ENCODE measurements at regions of chr14 and their contacts with region 1.

Region 1: DNA sequence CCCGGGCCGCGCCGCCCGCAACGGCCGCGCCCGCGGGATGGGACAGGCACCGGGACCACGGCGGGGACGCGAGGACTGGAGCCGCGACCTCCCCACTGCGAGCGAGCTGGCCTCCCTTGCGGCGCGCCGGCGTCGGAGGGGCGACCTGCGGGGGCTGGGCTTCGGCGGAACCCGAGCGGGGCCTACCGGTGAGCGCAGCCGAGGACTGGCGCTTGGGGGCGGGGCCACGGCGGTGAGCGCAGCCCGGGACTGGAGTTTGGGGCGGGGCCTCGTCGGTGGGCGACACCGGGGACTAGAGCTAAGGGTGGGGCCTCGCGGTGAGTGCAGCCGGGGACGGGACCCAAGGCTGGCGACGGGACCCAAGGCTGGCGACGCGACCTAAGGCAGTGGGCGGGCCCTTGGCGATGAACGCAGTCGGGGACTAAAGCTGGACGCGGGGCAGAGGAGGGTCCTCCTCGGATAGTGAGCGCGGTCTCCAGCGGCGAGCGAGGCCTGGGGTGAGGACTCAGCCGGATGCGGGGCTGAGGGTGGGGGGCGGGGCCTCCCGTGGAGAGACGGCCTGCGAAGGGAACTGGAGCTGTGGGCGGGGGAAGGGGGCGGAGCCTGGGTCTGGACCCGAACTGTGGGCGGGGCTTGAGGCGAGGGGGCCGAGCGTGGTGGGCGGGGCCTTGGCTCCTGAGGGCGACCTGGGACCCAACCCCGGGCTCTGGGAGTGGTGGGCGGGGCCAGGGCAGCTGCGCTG is at the start of gene BRF1:
- DNase-seq: peak; percentile 95 to 100 (median 99)
- ATAC-seq: peak; percentile 90
- H3K4me3 ChIP-seq: peak within 1 kb of the TSS; percentile 71 to 97
- H3K4me3 Mint-ChIP-seq: peak within 1 kb of the TSS; percentile 88
- H3K27ac ChIP-seq: peak within 1 kb of the TSS; percentile 86 to 91
- H3K27ac Mint-ChIP-seq: peak within 1 kb of the TSS; percentile 89
- H3K4me1 ChIP-seq: peaks cover 28% of the 10 kb centered on the region
- H3K4me1 Mint-ChIP-seq: peaks cover 37% of the 10 kb centered on the region
- H3K27me3 ChIP-seq: no peaks in the 10 kb centered on the region
- H3K27me3 Mint-ChIP-seq: no peaks in the 10 kb centered on the region
- CTCF ChIP-seq: no peak
- total RNA-seq, gene BRF1: 60.0 to 61.2 TPM

Region 2: DNA sequence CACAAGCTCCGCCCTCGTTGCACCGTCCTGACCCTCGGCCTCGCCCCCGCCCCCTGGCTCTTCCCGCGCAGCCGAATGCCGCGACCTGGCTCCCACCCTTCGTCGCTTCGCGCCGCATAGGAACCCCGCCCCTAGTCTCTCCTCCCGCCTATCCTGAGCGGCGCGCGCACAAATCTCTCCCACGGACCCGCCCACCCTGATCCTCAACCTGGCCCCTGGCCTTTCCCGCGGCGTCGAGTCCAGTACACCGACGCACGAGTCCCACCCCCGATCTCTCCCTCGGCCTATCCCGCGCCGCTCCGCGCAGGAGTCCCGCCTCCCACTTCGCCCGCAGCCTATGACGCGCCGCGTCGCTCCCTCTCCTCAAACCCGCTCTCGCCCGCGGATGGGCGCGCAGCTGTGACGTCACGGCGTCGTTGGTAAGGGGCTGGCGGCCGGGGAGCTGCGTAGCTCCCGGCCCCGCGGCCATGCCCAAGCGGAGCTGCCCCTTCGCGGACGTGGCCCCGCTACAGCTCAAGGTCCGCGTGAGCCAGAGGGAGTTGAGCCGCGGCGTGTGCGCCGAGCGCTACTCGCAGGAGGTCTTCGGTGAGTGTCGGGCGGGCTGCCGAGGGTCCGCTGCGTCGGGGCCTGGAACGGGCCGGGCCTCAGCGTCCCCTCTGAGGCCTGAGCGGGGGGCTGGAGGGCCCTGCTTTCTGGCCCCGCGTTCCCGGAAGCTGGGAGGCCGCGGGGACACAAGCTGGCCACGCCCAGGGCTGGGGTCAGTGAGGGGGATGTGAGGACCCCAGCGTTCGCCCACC is 548.0 kb before region 1 on chr14 and contains the start of gene SIVA1:
- CTCF ChIA-PET with region 1: no interaction called
- POLR2A ChIA-PET with region 1: no interaction called
- intact Hi-C with region 1: loop called in 1 of 2 experiments (anchors 10 kb)
- DNase-seq: peak; percentile 98 to 100 (median 99)
- ATAC-seq: peak; percentile 88
- H3K4me3 ChIP-seq: peak within 1 kb of the TSS; percentile 87 to 99
- H3K4me3 Mint-ChIP-seq: peak within 1 kb of the TSS; percentile 87
- H3K27ac ChIP-seq: peak within 1 kb of the TSS; percentile 86 to 97
- H3K27ac Mint-ChIP-seq: peak within 1 kb of the TSS; percentile 94
- H3K4me1 ChIP-seq: peaks cover 50% of the 10 kb centered on the region
- H3K4me1 Mint-ChIP-seq: peaks cover 48% of the 10 kb centered on the region
- H3K27me3 ChIP-seq: no peaks in the 10 kb centered on the region
- H3K27me3 Mint-ChIP-seq: no peaks in the 10 kb centered on the region
- CTCF ChIP-seq: no peak
- total RNA-seq, gene SIVA1: 104 to 115 TPM

Region 3: GRCh38 chr14:104985675-104986525 is 315.1 kb before region 1 on chr14 and contains the start of gene CLBA1:
- CTCF ChIA-PET with region 1: no interaction called
- POLR2A ChIA-PET with region 1: no interaction called
- intact Hi-C with region 1: loop called in 1 of 2 experiments (anchors 10 kb)
- DNase-seq: peak; percentile 75 to 97 (median 87)
- ATAC-seq: peak; percentile 94
- H3K4me3 ChIP-seq: peak within 1 kb of the TSS; percentile 54 to 60
- H3K4me3 Mint-ChIP-seq: peak within 1 kb of the TSS; percentile 78
- H3K27ac ChIP-seq: peak within 1 kb of the TSS; percentile 60 to 73
- H3K27ac Mint-ChIP-seq: peak within 1 kb of the TSS; percentile 57
- H3K4me1 ChIP-seq: peaks cover 8% of the 10 kb centered on the region
- H3K4me1 Mint-ChIP-seq: peaks cover 5% of the 10 kb centered on the region
- H3K27me3 ChIP-seq: no peaks in the 10 kb centered on the region
- H3K27me3 Mint-ChIP-seq: peaks cover 6% of the 10 kb centered on the region
- CTCF ChIP-seq: no peak
- total RNA-seq, gene CLBA1: 0.84 to 1.0 TPM

Region 4: DNA sequence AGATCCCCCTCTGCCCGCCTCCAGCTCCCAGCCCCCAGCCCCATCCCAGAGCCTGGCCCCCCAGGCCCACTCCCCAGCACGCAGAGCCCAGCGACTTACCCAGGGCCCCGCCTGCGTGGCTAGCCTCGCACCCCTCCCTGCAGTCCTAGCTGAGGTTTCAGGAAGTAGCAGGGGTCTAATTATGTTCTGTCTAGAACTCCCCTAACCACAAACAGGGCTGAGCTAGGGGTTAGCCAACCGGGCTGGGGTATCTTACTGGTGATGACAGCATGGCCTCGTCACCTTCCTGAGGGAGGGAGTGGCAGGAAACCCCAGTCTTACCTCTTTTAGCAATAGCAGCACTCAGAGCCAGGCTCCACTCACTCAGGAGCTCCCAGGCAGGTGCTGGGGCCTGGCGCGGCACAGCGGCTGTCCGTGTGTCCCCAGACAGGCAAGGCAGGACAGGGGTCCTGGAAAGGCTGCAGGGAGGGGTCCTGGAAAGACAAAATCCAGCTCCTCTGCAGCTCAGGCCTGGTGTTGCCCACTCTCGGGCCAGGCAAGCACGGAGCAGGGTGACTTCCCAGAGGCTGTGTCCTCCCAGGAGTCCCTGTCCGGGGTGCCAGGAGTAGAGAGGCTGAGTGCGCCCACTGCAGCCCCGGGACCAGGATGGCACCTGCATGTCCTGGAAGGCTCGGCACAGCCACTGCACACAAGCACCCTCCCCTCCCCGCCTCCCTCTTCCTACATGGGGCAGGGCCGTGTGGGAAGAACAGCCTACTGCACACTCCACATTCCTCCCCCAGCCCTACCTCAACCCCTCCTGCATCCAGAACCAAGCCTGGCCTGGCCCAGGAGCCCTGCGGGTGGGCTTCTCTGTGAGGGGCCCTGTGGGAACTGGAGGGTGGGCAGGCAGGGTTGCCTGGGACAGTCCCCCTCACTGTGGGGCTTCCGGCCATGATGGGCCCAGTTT is 235.4 kb before region 1 on chr14 and contains the start of gene GPR132:
- CTCF ChIA-PET with region 1: no interaction called
- POLR2A ChIA-PET with region 1: interaction called, 9 read pairs
- intact Hi-C with region 1: loop called (anchors 1 kb)
- DNase-seq: peak; percentile 79 to 99 (median 89)
- ATAC-seq: peak; percentile 87
- H3K4me3 ChIP-seq: peak within 1 kb of the TSS; percentile 90 to 92
- H3K4me3 Mint-ChIP-seq: peak within 1 kb of the TSS; percentile 94
- H3K27ac ChIP-seq: peak within 1 kb of the TSS; percentile 97 to 98
- H3K27ac Mint-ChIP-seq: peak within 1 kb of the TSS; percentile 98
- H3K4me1 ChIP-seq: peaks cover 88% of the 10 kb centered on the region
- H3K4me1 Mint-ChIP-seq: peaks cover 75% of the 10 kb centered on the region
- H3K27me3 ChIP-seq: no peaks in the 10 kb centered on the region
- H3K27me3 Mint-ChIP-seq: no peaks in the 10 kb centered on the region
- CTCF ChIP-seq: no peak
- total RNA-seq, gene GPR132: 91.8 to 101 TPM

Region 5: DNA sequence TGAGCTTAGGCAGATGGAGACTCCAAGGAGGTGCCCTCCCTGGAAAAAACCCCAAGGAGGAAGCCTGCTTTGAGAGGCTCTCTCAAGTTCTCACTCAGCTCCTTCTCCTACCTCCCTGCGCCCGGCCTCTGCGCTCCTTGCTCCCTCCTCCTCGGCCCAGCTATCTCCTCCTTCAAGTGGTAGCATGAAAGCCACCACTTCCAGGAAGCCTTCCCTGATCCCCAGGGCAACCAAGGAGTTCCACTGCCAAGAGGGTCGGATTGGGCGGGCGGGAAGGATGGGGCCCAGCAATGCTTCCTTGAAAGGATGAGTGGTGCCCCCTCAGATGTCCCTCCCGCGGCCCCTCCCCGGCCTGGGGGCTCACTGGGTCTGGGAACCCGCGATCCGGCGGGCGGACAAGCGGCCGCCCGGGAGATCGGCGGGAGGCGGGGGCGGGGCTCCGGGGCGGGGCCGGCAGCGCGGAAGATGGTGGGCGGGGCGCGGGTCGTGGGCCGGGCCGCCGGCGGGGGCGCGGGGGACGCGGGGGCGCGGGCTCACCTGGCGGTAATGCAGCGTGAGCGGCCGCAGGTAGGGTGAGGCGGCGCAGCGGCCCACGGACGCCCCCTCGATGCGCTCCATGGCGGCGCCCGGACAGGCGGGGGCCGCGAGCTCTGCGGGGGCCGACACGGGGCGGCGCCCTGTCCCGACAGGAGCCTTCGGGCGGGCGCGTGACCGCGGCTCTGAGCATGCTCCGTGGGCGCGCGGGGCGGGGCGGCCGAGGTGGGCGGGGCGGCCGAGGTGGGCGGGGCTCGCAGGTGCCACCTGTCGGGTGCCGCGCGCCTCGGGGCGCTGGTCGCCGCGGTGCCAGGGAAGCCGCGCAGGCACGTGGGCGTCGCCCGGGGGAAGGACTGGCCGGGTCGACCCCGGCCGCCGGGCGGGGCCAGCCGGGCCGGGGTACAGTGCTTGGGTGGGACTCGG is 120.1 kb before region 1 on chr14 and contains the start of gene NUDT14:
- CTCF ChIA-PET with region 1: no interaction called
- POLR2A ChIA-PET with region 1: no interaction called
- intact Hi-C with region 1: loop called (anchors 1 kb)
- DNase-seq: peak; percentile 77 to 95 (median 86)
- ATAC-seq: peak; percentile 94
- H3K4me3 ChIP-seq: peak within 1 kb of the TSS; percentile 36 to 37
- H3K4me3 Mint-ChIP-seq: peak within 1 kb of the TSS; percentile 76
- H3K27ac ChIP-seq: no peak within 1 kb of the TSS
- H3K27ac Mint-ChIP-seq: no peak within 1 kb of the TSS
- H3K4me1 ChIP-seq: peaks cover 25% of the 10 kb centered on the region
- H3K4me1 Mint-ChIP-seq: peaks cover 16% of the 10 kb centered on the region
- H3K27me3 ChIP-seq: no peaks in the 10 kb centered on the region
- H3K27me3 Mint-ChIP-seq: no peaks in the 10 kb centered on the region
- CTCF ChIP-seq: no peak
- total RNA-seq, gene NUDT14: 5.7 to 6.2 TPM

Region 6: GRCh38 chr14:105314287-105315200 is 13.6 kb after region 1 on chr14 and contains the start of gene PACS2:
- CTCF ChIA-PET with region 1: interaction called, 8 read pairs
- POLR2A ChIA-PET with region 1: interaction called, 38 read pairs
- intact Hi-C with region 1: loop called (anchors 1 kb)
- DNase-seq: peak; percentile 47 to 96 (median 76)
- ATAC-seq: peak; percentile 73
- H3K4me3 ChIP-seq: peak within 1 kb of the TSS; percentile 55 to 60
- H3K4me3 Mint-ChIP-seq: peak within 1 kb of the TSS; percentile 91
- H3K27ac ChIP-seq: peak within 1 kb of the TSS; percentile 24 to 52
- H3K27ac Mint-ChIP-seq: peak within 1 kb of the TSS; percentile 85
- H3K4me1 ChIP-seq: peaks cover 21% of the 10 kb centered on the region
- H3K4me1 Mint-ChIP-seq: peaks cover 24% of the 10 kb centered on the region
- H3K27me3 ChIP-seq: no peaks in the 10 kb centered on the region
- H3K27me3 Mint-ChIP-seq: no peaks in the 10 kb centered on the region
- CTCF ChIP-seq: no peak
- total RNA-seq, gene PACS2: 46.5 to 56.1 TPM

Measured in CD8-positive, alpha-beta T cell (primary cell).